ENCODE measurements at regions of chr17 and their contacts with region 1.

Region 1: GRCh38 chr17:39980351-39981206 is at the start of gene PSMD3:
- DNase-seq: peak; percentile 96 to 99 (median 99)
- H3K4me3 ChIP-seq: peak within 1 kb of the TSS; percentile 79 to 90
- H3K4me3 Mint-ChIP-seq: peak within 1 kb of the TSS; percentile 91 to 98 (median 95)
- H3K27ac ChIP-seq: peak within 1 kb of the TSS; percentile 96
- H3K27ac Mint-ChIP-seq: peak within 1 kb of the TSS; percentile 94 to 98 (median 97)
- H3K4me1 ChIP-seq: peaks cover 34% of the 10 kb centered on the region
- H3K4me1 Mint-ChIP-seq: peaks cover 22 to 45% (median 32%) of the 10 kb centered on the region in 4 donors
- H3K27me3 ChIP-seq: no peaks in the 10 kb centered on the region
- H3K27me3 Mint-ChIP-seq: no peaks in the 10 kb centered on the region
- total RNA-seq, gene PSMD3: 59.7 to 60.3 TPM

Region 2: DNA sequence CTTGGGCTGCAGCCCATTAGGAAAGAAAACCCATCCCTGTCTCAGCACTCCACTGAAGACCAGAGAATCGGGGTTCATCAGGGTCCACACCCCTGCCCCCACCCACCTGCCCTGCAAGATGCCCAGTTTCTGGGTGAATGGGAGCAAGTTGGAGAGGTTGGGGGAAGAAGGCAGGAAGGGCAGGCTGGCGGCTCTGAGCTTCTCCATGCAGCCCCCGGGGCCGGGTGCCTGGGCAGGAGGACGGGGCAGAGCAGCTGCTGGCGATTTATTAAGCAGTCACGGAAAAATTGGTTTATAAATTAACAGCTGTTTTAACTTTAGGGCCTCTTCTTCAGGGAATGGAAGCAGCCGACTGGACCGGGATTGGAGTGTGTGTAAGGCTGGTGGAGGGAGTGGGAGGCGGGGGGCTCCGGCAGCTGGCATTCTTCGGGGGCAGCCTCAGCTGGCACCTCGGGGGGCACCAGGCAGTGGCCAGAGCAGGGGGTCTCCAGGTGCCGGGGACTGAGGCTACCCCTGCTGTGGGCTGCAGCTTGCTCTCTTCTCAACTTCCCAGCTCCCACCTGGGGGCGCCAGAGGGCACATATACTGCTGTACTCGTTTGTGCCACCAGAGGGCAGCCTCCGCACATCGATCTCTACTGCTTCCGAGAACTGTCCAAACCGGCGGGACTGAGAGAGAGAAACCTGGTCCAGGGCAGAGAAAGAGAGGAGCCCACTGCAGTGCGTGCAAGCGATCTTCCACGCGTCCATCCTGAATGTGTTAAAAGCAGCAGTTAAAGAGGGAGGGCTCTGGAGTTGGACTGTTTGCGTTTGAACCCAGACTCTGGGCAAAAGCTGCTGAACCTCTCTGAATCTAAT is 358.8 kb before region 1 on chr17:
- CTCF ChIA-PET with region 1: interaction called, 10 read pairs
- POLR2A ChIA-PET with region 1: interaction called, 14 read pairs
- intact Hi-C with region 1: loop called (anchors 1 kb)
- DNase-seq: peak; percentile 82 to 90 (median 84)
- H3K4me3 ChIP-seq: peak overlapping the region in 1 of 2 donors; percentile 50
- H3K4me3 Mint-ChIP-seq: peak overlapping the region; percentile 65 to 85 (median 80)
- H3K27ac ChIP-seq: peak overlapping the region; percentile 4
- H3K27ac Mint-ChIP-seq: peak overlapping the region; percentile 54 to 90 (median 86)
- H3K4me1 ChIP-seq: peaks cover 36% of the 10 kb centered on the region
- H3K4me1 Mint-ChIP-seq: peaks cover 13 to 31% (median 20%) of the 10 kb centered on the region in 4 donors
- H3K27me3 ChIP-seq: peaks cover 14% of the 10 kb centered on the region
- H3K27me3 Mint-ChIP-seq: peaks cover 14 to 18% of the 10 kb centered on the region in 2 donors

Region 3: GRCh38 chr17:39769974-39770587 is 210.5 kb before region 1 on chr17:
- CTCF ChIA-PET with region 1: interaction called, 3 read pairs
- POLR2A ChIA-PET with region 1: no interaction called
- intact Hi-C with region 1: loop called (anchors 1 kb)
- DNase-seq: peak; percentile 67 to 92 (median 72)
- H3K4me3 ChIP-seq: peak overlapping the region in 1 of 2 donors; percentile 6
- H3K4me3 Mint-ChIP-seq: peak overlapping the region; percentile 33 to 96 (median 66)
- H3K27ac ChIP-seq: peak overlapping the region; percentile 77
- H3K27ac Mint-ChIP-seq: peak overlapping the region; percentile 88 to 98 (median 95)
- H3K4me1 ChIP-seq: peaks cover 100% of the 10 kb centered on the region
- H3K4me1 Mint-ChIP-seq: peaks cover 81 to 100% (median 89%) of the 10 kb centered on the region in 4 donors
- H3K27me3 ChIP-seq: no peaks in the 10 kb centered on the region
- H3K27me3 Mint-ChIP-seq: no peaks in the 10 kb centered on the region

Region 4: GRCh38 chr17:39872751-39873150 is 107.8 kb before region 1 on chr17:
- CTCF ChIA-PET with region 1: interaction called, 12 read pairs
- POLR2A ChIA-PET with region 1: interaction called, 10 read pairs
- intact Hi-C with region 1: loop called (anchors 1 kb)
- DNase-seq: no peak
- H3K4me3 ChIP-seq: no peak overlapping the region
- H3K4me3 Mint-ChIP-seq: no peak overlapping the region
- H3K27ac ChIP-seq: no peak overlapping the region
- H3K27ac Mint-ChIP-seq: peak overlapping the region in 1 of 7 donors; percentile 10
- H3K4me1 ChIP-seq: peaks cover 4% of the 10 kb centered on the region
- H3K4me1 Mint-ChIP-seq: peaks cover 5 to 17% (median 13%) of the 10 kb centered on the region in 4 donors
- H3K27me3 ChIP-seq: no peaks in the 10 kb centered on the region
- H3K27me3 Mint-ChIP-seq: no peaks in the 10 kb centered on the region

Region 5: DNA sequence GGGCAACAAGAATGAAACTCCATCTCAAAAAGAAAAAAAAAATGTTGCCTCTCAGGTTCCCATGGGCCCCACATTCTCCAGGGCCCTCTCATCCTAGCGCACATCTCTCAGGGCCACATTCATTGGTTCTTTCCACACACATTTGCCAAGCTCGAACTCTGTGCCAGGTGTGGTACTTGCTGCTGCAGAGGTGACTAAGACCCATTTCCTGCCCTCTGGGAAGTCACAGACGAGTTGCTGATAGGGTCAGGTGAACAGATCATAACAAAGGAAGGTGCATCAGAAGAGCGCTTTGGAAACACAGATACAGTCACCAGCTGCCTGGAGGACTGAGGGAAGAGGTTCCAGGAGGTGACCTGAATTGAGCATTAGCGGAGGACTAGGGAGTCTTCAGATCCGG is 16.8 kb before region 1 on chr17:
- CTCF ChIA-PET with region 1: interaction called, 197 read pairs
- POLR2A ChIA-PET with region 1: interaction called, 35 read pairs
- intact Hi-C with region 1: loop called (anchors 1 kb)
- DNase-seq: peak in 4 of 5 donors; percentile 17 to 51 (median 27)
- H3K4me3 ChIP-seq: no peak overlapping the region
- H3K4me3 Mint-ChIP-seq: peak overlapping the region in 6 of 8 donors; percentile 13 to 83 (median 47)
- H3K27ac ChIP-seq: no peak overlapping the region
- H3K27ac Mint-ChIP-seq: peak overlapping the region in 6 of 7 donors; percentile 38 to 95 (median 81)
- H3K4me1 ChIP-seq: peaks cover 30% of the 10 kb centered on the region
- H3K4me1 Mint-ChIP-seq: peaks cover 19 to 55% (median 35%) of the 10 kb centered on the region in 4 donors
- H3K27me3 ChIP-seq: no peaks in the 10 kb centered on the region
- H3K27me3 Mint-ChIP-seq: peaks cover 2 to 5% of the 10 kb centered on the region in 2 donors

Region 6: GRCh38 chr17:40121181-40122135 is 140.9 kb after region 1 on chr17 and contains the start of gene MSL1:
- CTCF ChIA-PET with region 1: no interaction called
- POLR2A ChIA-PET with region 1: interaction called, 11 read pairs
- intact Hi-C with region 1: no loop called
- DNase-seq: peak; percentile 82 to 91 (median 85)
- H3K4me3 ChIP-seq: peak within 1 kb of the TSS; percentile 86 to 98
- H3K4me3 Mint-ChIP-seq: peak within 1 kb of the TSS; percentile 76 to 96 (median 84)
- H3K27ac ChIP-seq: peak within 1 kb of the TSS; percentile 78
- H3K27ac Mint-ChIP-seq: peak within 1 kb of the TSS; percentile 78 to 92 (median 83)
- H3K4me1 ChIP-seq: peaks cover 35% of the 10 kb centered on the region
- H3K4me1 Mint-ChIP-seq: peaks cover 17 to 47% (median 31%) of the 10 kb centered on the region in 4 donors
- H3K27me3 ChIP-seq: no peaks in the 10 kb centered on the region
- H3K27me3 Mint-ChIP-seq: no peaks in the 10 kb centered on the region
- total RNA-seq, gene MSL1: 130 to 133 TPM

Measured in CD4-positive, alpha-beta memory T cell (primary cell).